ENCODE measurements at regions of chr20 and their contacts with region 1.

Region 1: GRCh38 chr20:34190679-34191090 is 50.5 kb upstream of the ASIP start:
- DNase-seq: peak; percentile 47
- H3K4me3 ChIP-seq: no peak overlapping the region
- H3K27me3 ChIP-seq: peaks cover 3% of the 10 kb centered on the region; the same call in 1 of the 2 replicates
- CTCF ChIP-seq: peak; percentile 89

Region 2: GRCh38 chr20:34111702-34112599 is 78.7 kb before region 1 on chr20 and contains the start of gene EIF2S2:
- CTCF ChIA-PET with region 1: no interaction called
- POLR2A ChIA-PET with region 1: no interaction called
- DNase-seq: peak; percentile 94
- H3K4me3 ChIP-seq: peak within 1 kb of the TSS; percentile 72
- H3K27me3 ChIP-seq: no peaks in the 10 kb centered on the region
- CTCF ChIP-seq: no peak
- polyA plus RNA-seq, gene EIF2S2: 78.6 and 135 TPM in 2 replicates

Region 3: DNA sequence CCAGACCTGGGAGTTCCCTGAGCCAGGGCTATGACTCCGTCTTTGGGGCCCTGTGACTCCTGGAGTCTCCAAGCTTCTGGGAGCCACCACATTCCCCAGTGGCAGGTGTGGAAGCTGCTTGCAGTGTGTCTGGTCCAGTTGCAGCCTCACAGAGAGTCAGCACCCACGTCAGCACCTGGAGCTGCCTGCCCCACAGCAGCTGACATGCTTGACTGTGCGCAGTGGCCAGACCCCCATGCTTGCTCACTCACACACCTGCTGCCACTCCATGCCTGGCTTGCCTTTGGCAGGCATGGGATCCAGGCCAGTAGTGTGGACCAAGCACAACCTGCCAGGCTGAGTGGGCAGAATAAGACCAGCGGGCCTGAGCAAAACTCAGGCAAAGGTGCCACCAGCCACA is 19.6 kb after region 1 on chr20:
- CTCF ChIA-PET with region 1: interaction called, 14 read pairs
- POLR2A ChIA-PET with region 1: no interaction called
- DNase-seq: no peak
- H3K4me3 ChIP-seq: no peak overlapping the region
- H3K27me3 ChIP-seq: no peaks in the 10 kb centered on the region
- CTCF ChIP-seq: no peak

Region 4: GRCh38 chr20:34254979-34255378 is 64.3 kb after region 1 on chr20:
- CTCF ChIA-PET with region 1: interaction called, 16 read pairs
- POLR2A ChIA-PET with region 1: no interaction called
- DNase-seq: no peak
- H3K4me3 ChIP-seq: no peak overlapping the region
- H3K27me3 ChIP-seq: no peaks in the 10 kb centered on the region
- CTCF ChIP-seq: no peak

Region 5: DNA sequence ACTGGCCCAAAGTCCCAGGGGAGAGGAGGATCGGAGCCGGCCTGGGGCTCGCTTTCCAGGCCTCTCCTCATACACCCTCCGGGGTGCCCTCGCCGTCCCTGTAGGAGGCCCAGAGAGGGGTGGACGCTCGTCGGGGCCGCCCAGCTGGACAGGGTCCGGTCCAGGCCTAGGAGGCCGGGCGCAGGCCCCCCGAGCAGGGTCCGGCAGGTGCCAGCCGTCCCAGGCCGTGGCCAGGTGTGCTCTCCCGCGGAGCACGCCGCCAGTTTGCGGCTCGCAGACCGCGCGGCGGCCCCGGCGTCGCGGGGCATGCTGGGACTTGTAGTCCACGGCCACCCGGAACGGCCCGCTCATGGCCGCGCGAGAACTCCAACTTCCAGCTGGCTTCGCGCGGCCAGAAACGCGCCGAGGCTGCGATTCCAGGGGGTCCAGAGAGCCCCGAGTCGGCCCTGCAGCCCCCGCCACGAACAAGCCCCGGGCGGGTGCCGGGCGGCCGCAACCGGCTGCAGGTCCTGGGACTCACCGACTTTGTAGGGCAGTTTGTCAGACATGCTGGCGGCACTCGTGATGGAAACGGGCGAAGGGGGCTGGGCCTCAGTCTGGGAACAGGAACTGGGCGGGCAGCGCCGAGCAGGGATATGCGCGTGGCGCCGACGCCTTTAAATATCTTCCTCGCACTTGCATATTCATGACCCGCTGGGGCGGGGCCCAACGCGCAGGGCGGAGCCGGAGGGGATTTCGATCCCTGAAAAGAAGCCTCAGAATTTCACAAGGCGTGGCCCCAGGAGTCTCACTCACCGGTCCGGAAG is 112.2 kb after region 1 on chr20 and contains the start of gene AHCY:
- CTCF ChIA-PET with region 1: interaction called, 21 read pairs
- POLR2A ChIA-PET with region 1: no interaction called
- DNase-seq: peak; percentile 86
- H3K4me3 ChIP-seq: peak within 1 kb of the TSS; percentile 91
- H3K27me3 ChIP-seq: no peaks in the 10 kb centered on the region
- CTCF ChIP-seq: no peak
- polyA plus RNA-seq, gene AHCY: 178 and 247 TPM in 2 replicates

Measured in BJ (cell line).